Aorta (tissue), 5 donors: ENCODE measurements at regions of chr13 and their contacts with region 1.

Region 1: GRCh38 chr13:104586051-104586746 is 1520.0 kb upstream of the SLC10A2 start:
- DNase-seq: no peak
- ATAC-seq: no peak
- H3K4me3 ChIP-seq: no peak overlapping the region
- H3K27ac ChIP-seq: no peak overlapping the region
- H3K4me1 ChIP-seq: no peaks in the 10 kb centered on the region
- H3K27me3 ChIP-seq: no peaks in the 10 kb centered on the region

Region 2: DNA sequence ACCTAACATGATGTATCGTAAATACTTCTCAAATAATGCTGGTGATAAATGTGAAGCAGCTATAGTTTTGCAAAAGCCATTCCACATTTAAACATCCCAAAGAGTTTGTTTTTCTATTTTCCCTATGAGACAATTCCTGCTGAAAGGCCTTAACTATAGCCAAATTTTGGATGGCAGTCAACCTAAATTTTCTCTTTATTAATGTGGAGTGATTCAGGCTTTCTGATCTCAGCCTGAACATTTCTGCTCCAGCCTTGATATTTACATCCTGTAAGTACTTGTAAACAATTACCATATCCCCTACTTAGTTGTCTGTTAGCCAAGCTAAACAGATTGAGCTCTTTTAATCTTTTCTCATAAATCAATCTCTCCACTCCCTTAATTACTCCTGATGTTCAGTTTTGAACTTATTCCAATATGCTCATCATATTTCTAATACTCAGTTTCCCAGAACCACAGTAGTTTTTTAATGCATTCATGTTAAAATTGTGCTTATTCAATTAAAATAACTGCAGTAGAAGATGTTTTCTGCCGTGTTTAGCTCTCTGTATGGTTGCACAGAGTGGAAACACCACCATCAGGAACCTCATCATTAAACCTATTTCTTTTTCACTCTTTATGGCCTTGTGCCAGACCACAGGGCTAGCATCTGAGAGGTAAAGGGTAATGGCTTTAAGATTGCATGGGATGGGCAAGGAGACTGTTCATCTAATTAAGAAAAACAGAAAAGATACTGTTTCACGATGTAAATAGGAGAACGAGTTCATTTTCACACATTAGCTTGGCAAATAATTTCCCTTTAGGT is 284.8 kb before region 1 on chr13:
- intact Hi-C with region 1: no loop called
- DNase-seq: no peak
- ATAC-seq: no peak
- H3K4me3 ChIP-seq: no peak overlapping the region
- H3K27ac ChIP-seq: no peak overlapping the region
- H3K4me1 ChIP-seq: no peaks in the 10 kb centered on the region
- H3K27me3 ChIP-seq: no peaks in the 10 kb centered on the region

Region 3: GRCh38 chr13:105773863-105774538 is 1187.8 kb after region 1 on chr13:
- intact Hi-C with region 1: loop called in 1 of 2 experiments (anchors 10 kb)
- DNase-seq: no peak
- ATAC-seq: no peak
- H3K4me3 ChIP-seq: no peak overlapping the region
- H3K27ac ChIP-seq: no peak overlapping the region
- H3K4me1 ChIP-seq: no peaks in the 10 kb centered on the region
- H3K27me3 ChIP-seq: no peaks in the 10 kb centered on the region